Right cardiac atrium (tissue), 5 donors: ENCODE measurements at regions of chr11 and their contacts with region 1.

Region 1: DNA sequence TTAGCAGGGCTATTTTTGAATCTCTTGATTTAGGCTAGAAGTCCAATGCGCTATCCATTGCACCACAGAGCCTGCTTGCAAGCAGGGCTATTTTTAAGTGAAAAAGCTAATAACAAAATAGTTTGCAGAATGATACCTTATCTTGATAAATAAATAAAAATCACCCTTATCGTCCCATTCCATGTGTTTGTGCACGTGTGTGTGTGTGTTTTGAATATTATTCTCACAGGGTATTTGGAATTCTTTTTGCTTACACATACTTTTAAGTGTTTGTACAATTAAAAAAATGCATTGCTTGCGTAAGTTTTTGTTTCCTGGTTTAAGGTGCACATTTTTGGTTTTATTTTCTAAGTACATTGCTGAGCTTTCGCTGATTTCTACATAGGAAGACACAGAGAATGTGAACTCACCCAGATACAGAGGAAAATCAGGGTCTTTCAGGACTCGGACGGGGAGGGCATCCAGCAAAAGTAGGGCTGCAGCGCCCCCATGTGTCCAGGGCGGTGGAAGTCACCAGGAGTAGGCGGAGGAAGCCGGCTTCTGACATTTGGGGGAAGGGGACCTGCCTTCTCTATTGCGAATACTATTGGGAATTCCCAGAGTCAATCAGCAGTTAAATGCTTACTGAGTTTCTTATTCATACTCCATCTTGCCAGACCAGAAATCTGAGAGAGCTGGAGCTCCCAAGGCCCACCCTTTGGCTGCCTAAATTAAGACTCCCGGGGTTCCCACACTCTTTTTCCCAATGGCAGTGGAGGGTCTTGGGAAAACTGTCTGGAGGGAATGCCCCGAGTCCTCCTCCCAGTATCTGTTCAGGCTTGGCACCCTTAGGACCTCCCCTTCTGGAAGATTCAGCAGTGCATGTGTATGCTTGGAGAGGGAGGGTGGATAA is 27.2 kb downstream of the SLC1A2 start:
- DNase-seq: peak; percentile 85 to 93 (median 88)
- ATAC-seq: peak; percentile 87 to 95
- H3K4me3 ChIP-seq: no peak overlapping the region
- H3K27ac ChIP-seq: no peak overlapping the region
- H3K4me1 ChIP-seq: no peaks in the 10 kb centered on the region
- H3K27me3 ChIP-seq: no peaks in the 10 kb centered on the region

Region 2: DNA sequence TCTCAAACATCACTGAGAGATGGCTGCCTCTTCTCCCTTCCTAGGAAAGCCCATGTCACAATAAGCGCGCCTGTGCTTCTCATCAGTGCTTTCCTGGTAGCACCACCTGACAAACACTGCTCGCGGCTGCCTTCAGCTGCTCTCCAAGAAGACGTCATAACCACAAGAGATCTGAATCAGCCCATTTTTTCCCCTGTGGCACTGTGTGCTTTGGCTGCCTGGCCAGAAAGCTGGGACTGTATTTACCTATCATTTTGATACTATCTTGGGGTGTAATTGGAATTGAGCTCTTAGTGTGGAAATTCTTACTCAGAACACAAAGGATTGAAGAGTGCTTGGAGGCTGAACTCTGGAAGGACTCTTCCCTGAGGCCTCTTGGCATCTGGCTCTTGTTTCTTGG is 821.6 kb before region 1 on chr11:
- intact Hi-C with region 1: loop called in 1 of 4 experiments (anchors 10 kb)
- DNase-seq: no peak
- ATAC-seq: no peak
- H3K4me3 ChIP-seq: no peak overlapping the region
- H3K27ac ChIP-seq: no peak overlapping the region
- H3K4me1 ChIP-seq: no peaks in the 10 kb centered on the region
- H3K27me3 ChIP-seq: peaks cover 2% of the 10 kb centered on the region

Region 3: DNA sequence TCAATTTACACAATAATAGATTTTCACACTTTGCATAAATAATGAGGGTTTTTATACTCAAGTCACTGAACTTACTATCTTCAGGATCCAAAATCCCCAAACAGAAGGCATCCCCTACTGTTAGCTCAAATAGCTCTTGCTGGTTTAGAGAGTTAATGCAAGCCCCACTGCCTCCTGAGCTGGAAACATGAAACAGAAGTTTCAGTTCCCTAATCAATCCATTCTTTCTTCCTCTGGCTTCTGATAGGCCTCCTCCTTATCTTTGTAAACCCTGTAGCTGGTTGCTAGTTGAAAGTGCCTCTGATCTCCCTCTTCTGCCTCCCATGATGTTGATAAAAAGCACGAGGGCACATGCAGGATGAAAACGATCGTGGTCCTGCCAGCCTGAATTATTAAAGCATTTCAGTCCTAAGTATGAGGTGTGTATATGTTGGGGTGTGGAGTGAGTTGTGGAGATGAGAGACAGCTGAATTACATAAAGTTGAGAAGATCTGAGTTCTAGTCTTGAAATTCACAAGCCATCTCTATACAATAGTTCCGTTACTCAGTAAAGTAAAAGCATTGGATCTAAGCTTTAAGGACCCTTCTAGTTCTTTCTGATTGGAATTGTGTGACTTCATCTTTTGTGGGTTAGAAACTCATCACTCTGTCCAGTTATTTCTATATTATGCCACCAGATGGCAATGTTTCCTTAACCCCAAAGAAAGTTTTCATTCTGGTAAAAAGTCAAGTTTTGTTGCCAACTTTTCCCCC is 806.3 kb before region 1 on chr11:
- intact Hi-C with region 1: loop called in 1 of 4 experiments (anchors 5 kb)
- DNase-seq: no peak
- ATAC-seq: peak; percentile 36 to 53
- H3K4me3 ChIP-seq: no peak overlapping the region
- H3K27ac ChIP-seq: no peak overlapping the region
- H3K4me1 ChIP-seq: no peaks in the 10 kb centered on the region
- H3K27me3 ChIP-seq: no peaks in the 10 kb centered on the region

Region 4: GRCh38 chr11:34926101-34926830 is 465.9 kb before region 1 on chr11:
- intact Hi-C with region 1: loop called (anchors 5 to 10 kb)
- DNase-seq: no peak
- ATAC-seq: peak; percentile 34 to 60
- H3K4me3 ChIP-seq: no peak overlapping the region
- H3K27ac ChIP-seq: no peak overlapping the region
- H3K4me1 ChIP-seq: peaks cover 5% of the 10 kb centered on the region
- H3K27me3 ChIP-seq: no peaks in the 10 kb centered on the region

Region 5: DNA sequence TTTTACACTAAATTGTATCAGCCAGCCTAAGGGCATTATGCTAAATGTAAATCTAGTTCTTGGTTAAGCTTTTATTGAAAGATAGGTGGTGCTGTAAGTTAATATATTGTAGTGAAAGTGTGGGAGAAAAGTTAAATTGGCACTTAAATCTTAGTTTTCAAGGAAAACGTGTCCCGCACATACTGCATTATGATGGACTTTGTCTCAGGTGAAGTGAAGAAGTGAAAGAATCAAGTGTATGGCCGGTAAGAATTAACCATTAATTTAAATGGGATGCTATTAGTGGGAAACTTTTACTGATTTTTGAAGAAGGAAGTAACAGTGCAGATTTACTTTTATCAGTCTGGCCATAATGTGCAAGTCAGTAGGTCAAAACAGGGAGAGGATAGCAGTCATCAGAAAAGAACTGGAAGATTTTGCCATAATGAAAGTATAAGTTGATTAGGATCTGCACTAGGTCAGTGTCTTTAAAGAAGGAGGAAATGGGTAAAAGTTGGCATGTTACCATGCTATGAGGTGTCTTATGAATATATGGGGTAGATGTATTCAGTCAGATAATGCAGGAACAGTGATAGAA is 394.1 kb before region 1 on chr11:
- intact Hi-C with region 1: loop called in 2 of 4 experiments (anchors 10 kb)
- DNase-seq: no peak
- ATAC-seq: no peak
- H3K4me3 ChIP-seq: no peak overlapping the region
- H3K27ac ChIP-seq: no peak overlapping the region
- H3K4me1 ChIP-seq: no peaks in the 10 kb centered on the region
- H3K27me3 ChIP-seq: no peaks in the 10 kb centered on the region

Region 6: GRCh38 chr11:35006389-35007128 is 385.6 kb before region 1 on chr11:
- intact Hi-C with region 1: loop called in 1 of 4 experiments (anchors 10 kb)
- DNase-seq: no peak
- ATAC-seq: no peak
- H3K4me3 ChIP-seq: no peak overlapping the region
- H3K27ac ChIP-seq: no peak overlapping the region
- H3K4me1 ChIP-seq: no peaks in the 10 kb centered on the region
- H3K27me3 ChIP-seq: no peaks in the 10 kb centered on the region

Region 7: GRCh38 chr11:35214792-35215193 is 177.4 kb before region 1 on chr11:
- intact Hi-C with region 1: no loop called
- DNase-seq: no peak
- ATAC-seq: peak in 1 of 2 donors; percentile 62
- H3K4me3 ChIP-seq: no peak overlapping the region
- H3K27ac ChIP-seq: no peak overlapping the region
- H3K4me1 ChIP-seq: no peaks in the 10 kb centered on the region
- H3K27me3 ChIP-seq: no peaks in the 10 kb centered on the region

Region 8: DNA sequence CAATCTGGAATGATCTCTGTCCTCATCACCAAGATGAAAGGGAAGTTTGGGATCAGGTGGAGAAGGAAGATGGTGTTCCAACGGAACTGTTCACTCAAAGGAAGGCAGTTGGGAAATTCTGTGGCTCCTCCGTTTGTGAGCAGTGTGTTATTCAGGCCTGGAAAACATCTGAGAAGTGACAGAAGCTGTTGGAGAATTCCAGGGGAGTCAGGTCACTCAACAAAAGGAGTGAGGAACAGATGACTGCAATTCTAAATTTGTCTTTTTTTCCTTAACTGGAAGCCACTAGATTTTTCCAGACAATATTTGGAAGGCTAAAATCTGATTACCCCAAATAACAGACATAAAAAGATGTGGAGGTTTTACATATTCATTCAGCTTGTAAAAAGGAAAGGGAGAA is 145.4 kb before region 1 on chr11:
- intact Hi-C with region 1: loop called in 2 of 4 experiments (anchors 10 kb)
- DNase-seq: no peak
- ATAC-seq: peak; percentile 48 to 69
- H3K4me3 ChIP-seq: no peak overlapping the region
- H3K27ac ChIP-seq: no peak overlapping the region
- H3K4me1 ChIP-seq: peaks cover 2% of the 10 kb centered on the region
- H3K27me3 ChIP-seq: no peaks in the 10 kb centered on the region

Region 9: GRCh38 chr11:35305670-35306382 is 86.3 kb before region 1 on chr11:
- intact Hi-C with region 1: no loop called
- DNase-seq: no peak
- ATAC-seq: no peak
- H3K4me3 ChIP-seq: no peak overlapping the region
- H3K27ac ChIP-seq: no peak overlapping the region
- H3K4me1 ChIP-seq: no peaks in the 10 kb centered on the region
- H3K27me3 ChIP-seq: no peaks in the 10 kb centered on the region